A673 (cell line): ENCODE measurements at regions of chrX and their contacts with region 1.

Region 1: DNA sequence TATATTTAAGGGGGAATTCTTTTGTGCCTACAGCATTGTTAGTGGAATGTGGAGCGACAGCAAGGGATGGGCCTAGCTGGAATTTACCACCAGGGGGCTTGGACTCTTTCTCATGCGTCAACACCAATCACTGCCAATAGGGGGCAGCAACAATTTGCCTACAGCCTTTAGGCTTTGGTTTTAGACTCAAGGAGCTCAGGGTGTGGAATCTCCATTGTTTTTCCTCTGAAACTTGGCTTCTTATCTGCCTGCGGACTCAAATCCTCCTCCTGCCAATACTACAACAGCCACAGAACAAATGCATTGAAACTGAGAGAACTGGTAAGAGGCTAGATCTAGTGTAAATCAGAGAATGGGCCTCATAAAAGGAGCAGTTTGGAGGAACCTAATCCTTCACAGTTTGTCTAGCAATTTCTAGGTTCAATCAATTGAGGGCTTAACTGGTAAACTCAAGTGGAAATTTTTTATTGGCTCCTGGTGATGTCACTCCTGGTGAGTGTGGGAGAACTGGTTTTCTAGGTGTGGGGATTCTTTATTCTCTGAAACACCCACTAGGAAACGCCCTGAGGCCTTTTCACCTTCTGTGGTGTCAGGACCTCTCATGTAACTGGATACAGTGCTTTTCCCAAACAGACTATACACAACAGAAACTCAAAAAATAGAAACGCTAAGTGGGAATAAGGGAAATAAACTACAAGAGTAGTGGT is 27.9 kb upstream of the TMSB4X start:
- DNase-seq: peak; percentile 89
- H3K4me3 ChIP-seq: no peak overlapping the region
- H3K27ac ChIP-seq: peak overlapping the region; percentile 51
- H3K4me1 ChIP-seq: peaks cover 37% of the 10 kb centered on the region
- H3K27me3 ChIP-seq: no peaks in the 10 kb centered on the region
- CTCF ChIP-seq: peak; percentile 99

Region 2: GRCh38 chrX:13341491-13342101 is 394.6 kb after region 1 on chrX:
- CTCF ChIA-PET with region 1: no interaction called
- POLR2A ChIA-PET with region 1: no interaction called
- intact Hi-C with region 1: loop called (anchors 10 kb)
- DNase-seq: no peak
- H3K4me3 ChIP-seq: no peak overlapping the region
- H3K27ac ChIP-seq: no peak overlapping the region
- H3K4me1 ChIP-seq: no peaks in the 10 kb centered on the region
- H3K27me3 ChIP-seq: no peaks in the 10 kb centered on the region
- CTCF ChIP-seq: no peak

Region 3: DNA sequence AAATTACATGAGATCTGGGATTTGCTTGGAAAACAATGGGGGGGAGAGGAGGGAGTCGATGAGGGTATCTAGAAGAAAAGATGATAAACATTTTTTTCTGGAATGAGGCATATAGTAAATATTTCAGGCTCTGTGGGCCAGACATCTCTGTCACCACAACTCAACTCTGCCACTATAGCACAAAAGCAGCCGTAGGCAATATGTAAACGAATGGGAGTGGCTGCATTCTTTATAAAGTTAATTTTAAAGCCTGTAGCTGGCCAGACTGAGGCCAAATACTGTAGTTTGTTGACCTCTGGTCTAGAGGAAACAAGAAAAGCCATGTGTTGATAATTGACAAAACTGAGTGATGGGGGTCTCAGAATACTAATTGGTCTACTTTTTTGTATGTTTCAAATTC is 691.8 kb after region 1 on chrX:
- CTCF ChIA-PET with region 1: no interaction called
- POLR2A ChIA-PET with region 1: no interaction called
- intact Hi-C with region 1: loop called (anchors 10 kb)
- DNase-seq: no peak
- H3K4me3 ChIP-seq: no peak overlapping the region
- H3K27ac ChIP-seq: no peak overlapping the region
- H3K4me1 ChIP-seq: no peaks in the 10 kb centered on the region
- H3K27me3 ChIP-seq: no peaks in the 10 kb centered on the region
- CTCF ChIP-seq: no peak